ENCODE measurements at regions of chr3 and their contacts with region 1.

Region 1: GRCh38 chr3:124634210-124635168 is 95.8 kb upstream of the UMPS start:
- DNase-seq: no peak
- ATAC-seq: peak; percentile 53
- H3K4me3 ChIP-seq: no peak overlapping the region
- H3K27ac ChIP-seq: no peak overlapping the region
- H3K4me1 ChIP-seq: peaks cover 22% of the 10 kb centered on the region
- H3K27me3 ChIP-seq: no peaks in the 10 kb centered on the region
- CTCF ChIP-seq: no peak
- EP300 ChIP-seq: no peak
- POLR2A ChIP-seq: no peak
- RAD21 ChIP-seq: no peak

Region 2: GRCh38 chr3:124584552-124585391 is 49.7 kb before region 1 on chr3:
- CTCF ChIA-PET with region 1: interaction called, 4 read pairs
- POLR2A ChIA-PET with region 1: no interaction called
- RAD21 ChIA-PET with region 1: interaction called, 10 read pairs
- SMC1A ChIA-PET with region 1: interaction called, 4 read pairs
- in situ Hi-C with region 1: no loop called
- intact Hi-C with region 1: no loop called
- DNase-seq: no peak
- ATAC-seq: peak; percentile 73
- H3K4me3 ChIP-seq: peak overlapping the region; percentile 61; the same call in 1 of the 2 replicates
- H3K27ac ChIP-seq: no peak overlapping the region
- H3K4me1 ChIP-seq: peaks cover 7% of the 10 kb centered on the region
- H3K27me3 ChIP-seq: peaks cover 3 to 10% of the 10 kb centered on the region in 2 experiments; a peak in 2 of 4 replicates
- CTCF ChIP-seq: no peak
- EP300 ChIP-seq: no peak
- POLR2A ChIP-seq: no peak
- RAD21 ChIP-seq: no peak

Region 3: DNA sequence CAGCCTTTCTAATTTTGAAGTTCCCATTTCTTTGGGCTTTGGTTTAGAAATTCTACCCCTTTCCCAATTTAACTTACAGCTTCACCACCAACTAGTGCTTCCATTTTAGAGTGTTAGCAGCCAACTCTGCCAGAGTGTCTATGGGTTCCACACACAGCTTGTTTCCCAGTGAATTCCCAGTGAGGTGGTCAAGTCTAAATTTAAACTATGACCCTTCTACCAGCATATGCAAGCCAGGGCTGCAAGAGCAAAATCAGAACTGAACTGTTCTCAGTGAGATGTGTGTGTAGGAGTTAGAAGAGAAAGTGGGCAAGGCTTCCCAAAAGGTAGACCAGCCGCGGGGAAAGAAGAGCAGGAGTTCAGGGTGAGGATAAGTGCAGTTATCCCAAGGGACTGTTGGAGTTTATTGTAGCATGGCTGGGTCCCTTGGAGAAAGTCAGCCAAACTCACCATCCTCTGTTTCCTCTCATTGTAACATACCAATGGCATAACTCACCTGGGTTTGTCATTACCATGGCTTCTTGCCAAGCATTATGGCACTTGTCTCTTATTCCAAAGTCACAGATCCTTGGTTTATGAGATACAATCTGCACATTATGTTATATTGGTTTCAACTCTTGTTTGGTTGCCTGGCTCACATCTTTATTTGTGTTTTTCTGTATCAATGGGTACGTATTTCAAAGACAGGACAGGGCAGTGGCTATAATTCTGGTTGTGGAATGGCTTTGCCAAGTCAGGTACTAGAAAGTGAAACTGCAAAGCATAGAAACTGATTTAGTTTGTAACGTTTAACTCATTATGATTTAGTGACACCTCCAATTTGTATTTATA is 34.5 kb before region 1 on chr3:
- CTCF ChIA-PET with region 1: interaction called, 3 read pairs
- POLR2A ChIA-PET with region 1: no interaction called
- RAD21 ChIA-PET with region 1: interaction called, 5 read pairs
- SMC1A ChIA-PET with region 1: interaction called, 10 read pairs
- in situ Hi-C with region 1: no loop called
- intact Hi-C with region 1: no loop called
- DNase-seq: no peak
- ATAC-seq: peak; percentile 32; the same call in 1 of the 3 replicates
- H3K4me3 ChIP-seq: no peak overlapping the region
- H3K27ac ChIP-seq: no peak overlapping the region
- H3K4me1 ChIP-seq: no peaks in the 10 kb centered on the region
- H3K27me3 ChIP-seq: no peaks in the 10 kb centered on the region
- CTCF ChIP-seq: no peak
- EP300 ChIP-seq: no peak
- POLR2A ChIP-seq: no peak
- RAD21 ChIP-seq: no peak